ENCODE measurements at regions of chr1 and their contacts with region 1.

Region 1: DNA sequence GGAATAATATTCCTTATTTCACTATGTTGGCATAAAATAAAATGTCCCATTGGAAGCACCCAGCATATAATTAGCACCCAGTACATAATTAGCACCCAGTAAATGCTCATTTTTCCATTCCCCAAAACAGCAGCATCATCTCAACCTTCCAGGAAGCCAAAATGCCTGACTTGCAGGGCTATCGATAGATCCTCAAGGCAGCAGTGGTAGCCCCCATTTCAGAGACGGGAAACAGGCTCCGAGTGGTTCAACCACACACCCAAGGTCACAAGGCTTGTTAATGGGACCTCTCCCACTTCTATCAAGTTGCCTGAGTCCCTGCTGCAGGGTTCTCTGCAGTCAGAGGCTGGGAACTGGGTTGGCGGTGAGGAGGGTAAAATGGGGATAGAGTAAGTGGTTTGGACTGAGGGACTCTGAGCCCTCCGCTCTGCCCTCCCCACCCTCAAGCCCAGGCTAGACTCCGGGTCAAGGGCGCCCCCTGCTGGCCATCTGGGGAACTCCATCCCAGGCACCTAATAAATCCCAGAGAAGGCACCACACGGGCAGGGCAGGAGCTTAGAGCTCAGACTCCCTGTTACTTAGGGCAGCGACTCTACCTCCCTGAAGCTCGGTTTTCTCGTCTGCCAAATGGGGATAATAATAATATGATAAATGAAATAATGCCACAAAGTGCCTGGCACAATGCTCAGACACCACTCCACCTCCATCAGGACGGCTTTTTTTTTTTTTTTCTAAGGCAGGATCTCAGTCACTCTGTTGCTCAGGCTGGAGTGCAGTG is 21.9 kb upstream of the LAPTM5 start:
- DNase-seq: peak; percentile 84 to 99 (median 90)
- ATAC-seq: peak; percentile 89
- H3K4me3 ChIP-seq: peak overlapping the region in 1 of 2 experiments; percentile 8
- H3K4me3 Mint-ChIP-seq: no peak overlapping the region
- H3K27ac ChIP-seq: no peak overlapping the region
- H3K27ac Mint-ChIP-seq: no peak overlapping the region
- H3K4me1 ChIP-seq: peaks cover 16% of the 10 kb centered on the region
- H3K4me1 Mint-ChIP-seq: peaks cover 17% of the 10 kb centered on the region
- H3K27me3 ChIP-seq: no peaks in the 10 kb centered on the region
- H3K27me3 Mint-ChIP-seq: no peaks in the 10 kb centered on the region
- CTCF ChIP-seq: peak; percentile 83

Region 2: GRCh38 chr1:29235955-29236684 is 1543.4 kb before region 1 on chr1 and contains the start of gene PTPRU:
- CTCF ChIA-PET with region 1: no interaction called
- POLR2A ChIA-PET with region 1: no interaction called
- intact Hi-C with region 1: loop called in 1 of 2 experiments (anchors 5 kb)
- DNase-seq: peak; percentile 62 to 89 (median 78)
- ATAC-seq: peak; percentile 95
- H3K4me3 ChIP-seq: peak within 1 kb of the TSS; percentile 24 to 36
- H3K4me3 Mint-ChIP-seq: peak within 1 kb of the TSS; percentile 84
- H3K27ac ChIP-seq: no peak within 1 kb of the TSS
- H3K27ac Mint-ChIP-seq: no peak within 1 kb of the TSS
- H3K4me1 ChIP-seq: peaks cover 20% of the 10 kb centered on the region
- H3K4me1 Mint-ChIP-seq: peaks cover 23% of the 10 kb centered on the region
- H3K27me3 ChIP-seq: peaks cover 16 to 17% of the 10 kb centered on the region in 2 experiments
- H3K27me3 Mint-ChIP-seq: peaks cover 43% of the 10 kb centered on the region
- CTCF ChIP-seq: peak; percentile 71
- total RNA-seq, gene PTPRU: 0.25 TPM in 1 of 2 experiments, not detected in the other

Region 3: DNA sequence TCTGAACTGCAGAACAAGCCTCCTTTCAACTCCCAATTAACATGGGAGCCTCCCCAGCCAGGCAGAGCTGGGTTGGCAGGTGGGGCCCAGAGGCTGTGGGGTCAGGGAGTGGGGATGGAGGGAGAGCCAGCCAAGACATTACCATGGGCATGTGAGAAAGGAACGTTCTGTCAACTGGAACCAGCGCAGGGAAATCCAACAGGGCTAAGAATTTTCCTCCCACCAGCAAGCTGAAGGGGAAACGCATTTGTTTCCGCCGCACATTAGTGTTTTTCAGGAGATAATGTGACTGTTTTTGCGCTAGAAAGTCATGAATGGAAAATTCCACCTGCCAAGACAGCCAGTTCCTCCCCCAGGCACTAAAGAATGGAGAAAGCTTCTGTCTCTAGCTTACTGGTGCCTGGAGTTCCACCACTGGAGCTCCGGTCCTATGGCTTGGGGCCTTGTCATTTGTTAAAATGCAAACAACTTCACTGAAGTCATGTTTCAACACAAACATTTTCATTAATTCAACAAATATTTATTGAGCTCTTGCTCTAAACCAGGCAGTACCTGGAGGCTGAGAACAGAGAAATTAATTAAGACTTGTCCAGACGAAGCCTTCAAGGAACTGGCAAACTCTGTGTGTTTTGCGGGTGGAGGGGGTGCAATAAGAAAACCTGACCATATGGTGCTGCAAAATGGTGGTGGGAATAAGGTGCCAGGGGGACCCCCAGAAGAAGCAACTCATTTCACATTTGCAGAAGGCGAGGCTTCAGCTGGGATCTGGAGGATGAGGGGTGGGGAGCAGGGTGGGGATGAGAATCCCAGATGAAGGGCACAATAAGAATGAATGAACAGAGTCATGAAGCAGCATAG is 361.2 kb before region 1 on chr1:
- CTCF ChIA-PET with region 1: no interaction called
- POLR2A ChIA-PET with region 1: no interaction called
- intact Hi-C with region 1: no loop called
- DNase-seq: peak in 1 of 9 experiments; percentile 34
- ATAC-seq: no peak
- H3K4me3 ChIP-seq: no peak overlapping the region
- H3K4me3 Mint-ChIP-seq: no peak overlapping the region
- H3K27ac ChIP-seq: no peak overlapping the region
- H3K27ac Mint-ChIP-seq: no peak overlapping the region
- H3K4me1 ChIP-seq: no peaks in the 10 kb centered on the region
- H3K4me1 Mint-ChIP-seq: no peaks in the 10 kb centered on the region
- H3K27me3 ChIP-seq: no peaks in the 10 kb centered on the region
- H3K27me3 Mint-ChIP-seq: peaks cover 21% of the 10 kb centered on the region
- CTCF ChIP-seq: no peak

Region 4: GRCh38 chr1:30756545-30757195 is 22.8 kb before region 1 on chr1:
- CTCF ChIA-PET with region 1: interaction called, 338 read pairs
- POLR2A ChIA-PET with region 1: interaction called, 10 read pairs
- intact Hi-C with region 1: loop called (anchors 1 to 2 kb)
- DNase-seq: peak; percentile 52 to 92 (median 80)
- ATAC-seq: peak; percentile 59
- H3K4me3 ChIP-seq: peak overlapping the region; percentile 70 to 87
- H3K4me3 Mint-ChIP-seq: peak overlapping the region; percentile 97
- H3K27ac ChIP-seq: peak overlapping the region; percentile 78 to 92
- H3K27ac Mint-ChIP-seq: peak overlapping the region; percentile 99
- H3K4me1 ChIP-seq: peaks cover 72% of the 10 kb centered on the region
- H3K4me1 Mint-ChIP-seq: peaks cover 86% of the 10 kb centered on the region
- H3K27me3 ChIP-seq: no peaks in the 10 kb centered on the region
- H3K27me3 Mint-ChIP-seq: no peaks in the 10 kb centered on the region
- CTCF ChIP-seq: no peak

Region 5: DNA sequence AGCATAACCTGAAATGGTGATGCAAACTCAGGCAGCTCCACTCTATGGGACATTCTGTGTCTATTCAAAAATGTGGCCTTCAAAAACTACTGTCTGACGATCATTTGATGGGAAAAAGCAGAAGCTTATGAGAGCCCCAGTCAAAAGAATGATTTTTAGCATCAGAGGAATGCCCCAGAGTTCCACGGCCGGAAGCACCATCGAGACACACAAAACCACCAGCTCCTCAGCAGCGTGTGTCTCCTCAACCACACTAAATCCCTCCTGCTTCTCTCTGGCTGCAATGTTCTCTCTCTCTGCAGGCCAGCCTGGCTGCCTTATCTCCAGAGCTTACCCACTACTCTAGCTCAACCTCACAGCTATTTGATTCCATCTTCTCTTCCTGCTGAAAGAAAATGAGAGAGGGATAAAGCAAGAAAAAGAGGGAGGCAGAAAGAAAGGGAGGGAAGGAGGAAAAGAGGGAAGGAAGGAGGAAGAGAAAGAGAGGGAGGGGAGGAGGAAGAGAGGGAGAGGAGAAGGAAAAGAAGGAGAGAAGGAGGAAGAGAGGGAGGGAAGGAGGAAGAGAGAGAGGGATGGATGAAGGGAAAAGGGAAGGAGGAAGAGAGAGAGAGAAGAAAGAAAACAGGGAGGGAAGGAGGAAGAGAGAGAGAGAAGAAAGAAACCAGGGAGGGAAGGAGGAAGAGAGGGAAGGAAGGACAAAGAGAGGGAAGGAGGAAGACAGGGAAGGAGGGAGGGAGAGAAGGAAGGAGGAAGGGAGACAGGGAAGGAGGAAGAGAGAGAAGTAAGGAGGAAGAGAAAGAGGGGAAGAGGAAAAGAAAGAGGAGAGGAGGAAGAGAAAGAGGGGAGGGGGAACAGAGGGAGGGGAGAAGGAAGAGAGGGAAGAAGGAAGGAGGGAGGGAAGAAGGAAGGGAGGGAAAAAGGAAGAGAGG is 11.6 kb after region 1 on chr1:
- CTCF ChIA-PET with region 1: interaction called, 19 read pairs
- POLR2A ChIA-PET with region 1: no interaction called
- intact Hi-C with region 1: no loop called
- DNase-seq: peak in 3 of 9 experiments; percentile 18 to 68 (median 56)
- ATAC-seq: peak; percentile 69
- H3K4me3 ChIP-seq: no peak overlapping the region
- H3K4me3 Mint-ChIP-seq: no peak overlapping the region
- H3K27ac ChIP-seq: no peak overlapping the region
- H3K27ac Mint-ChIP-seq: no peak overlapping the region
- H3K4me1 ChIP-seq: peaks cover 9% of the 10 kb centered on the region
- H3K4me1 Mint-ChIP-seq: peaks cover 7% of the 10 kb centered on the region
- H3K27me3 ChIP-seq: peaks cover 0 to 4% of the 10 kb centered on the region in 2 experiments
- H3K27me3 Mint-ChIP-seq: peaks cover 15% of the 10 kb centered on the region
- CTCF ChIP-seq: no peak

Region 6: GRCh38 chr1:30929135-30929889 is 149.8 kb after region 1 on chr1:
- CTCF ChIA-PET with region 1: interaction called, 10 read pairs
- POLR2A ChIA-PET with region 1: no interaction called
- intact Hi-C with region 1: loop called (anchors 1 to 2 kb)
- DNase-seq: peak in 7 of 9 experiments; percentile 20 to 65 (median 51)
- ATAC-seq: peak; percentile 76
- H3K4me3 ChIP-seq: no peak overlapping the region
- H3K4me3 Mint-ChIP-seq: no peak overlapping the region
- H3K27ac ChIP-seq: peak overlapping the region in 1 of 2 experiments; percentile 55
- H3K27ac Mint-ChIP-seq: peak overlapping the region; percentile 10
- H3K4me1 ChIP-seq: peaks cover 3% of the 10 kb centered on the region
- H3K4me1 Mint-ChIP-seq: no peaks in the 10 kb centered on the region
- H3K27me3 ChIP-seq: no peaks in the 10 kb centered on the region
- H3K27me3 Mint-ChIP-seq: no peaks in the 10 kb centered on the region
- CTCF ChIP-seq: peak; percentile 76